ENCODE measurements at regions of chrX and their contacts with region 1.

Region 1: DNA sequence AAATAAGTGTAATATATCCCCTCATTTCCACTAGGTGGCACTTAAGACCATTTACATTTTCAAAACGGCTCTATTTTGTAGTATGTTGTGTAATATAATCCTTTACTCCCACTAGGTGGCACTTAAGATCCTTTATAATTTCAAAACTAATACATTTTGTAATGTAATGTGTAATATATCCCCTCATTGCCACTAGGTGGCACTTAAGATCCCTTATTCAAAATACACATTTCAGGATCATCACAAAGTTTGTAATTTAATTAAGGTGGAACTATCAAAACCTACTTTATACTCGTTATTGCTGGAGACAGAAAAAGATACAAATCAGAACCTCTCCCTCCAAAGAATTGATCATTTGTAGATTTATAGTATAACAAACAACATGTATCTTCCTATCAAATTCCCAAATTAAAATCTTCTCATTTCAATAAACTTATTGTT is 132.5 kb downstream of the ARHGAP6 start:
- DNase-seq: no peak
- H3K4me3 ChIP-seq: no peak overlapping the region
- H3K27ac ChIP-seq: no peak overlapping the region
- H3K4me1 ChIP-seq: no peaks in the 10 kb centered on the region
- H3K27me3 ChIP-seq: no peaks in the 10 kb centered on the region
- CTCF ChIP-seq: peak; percentile 74 to 87 (median 77)

Region 2: DNA sequence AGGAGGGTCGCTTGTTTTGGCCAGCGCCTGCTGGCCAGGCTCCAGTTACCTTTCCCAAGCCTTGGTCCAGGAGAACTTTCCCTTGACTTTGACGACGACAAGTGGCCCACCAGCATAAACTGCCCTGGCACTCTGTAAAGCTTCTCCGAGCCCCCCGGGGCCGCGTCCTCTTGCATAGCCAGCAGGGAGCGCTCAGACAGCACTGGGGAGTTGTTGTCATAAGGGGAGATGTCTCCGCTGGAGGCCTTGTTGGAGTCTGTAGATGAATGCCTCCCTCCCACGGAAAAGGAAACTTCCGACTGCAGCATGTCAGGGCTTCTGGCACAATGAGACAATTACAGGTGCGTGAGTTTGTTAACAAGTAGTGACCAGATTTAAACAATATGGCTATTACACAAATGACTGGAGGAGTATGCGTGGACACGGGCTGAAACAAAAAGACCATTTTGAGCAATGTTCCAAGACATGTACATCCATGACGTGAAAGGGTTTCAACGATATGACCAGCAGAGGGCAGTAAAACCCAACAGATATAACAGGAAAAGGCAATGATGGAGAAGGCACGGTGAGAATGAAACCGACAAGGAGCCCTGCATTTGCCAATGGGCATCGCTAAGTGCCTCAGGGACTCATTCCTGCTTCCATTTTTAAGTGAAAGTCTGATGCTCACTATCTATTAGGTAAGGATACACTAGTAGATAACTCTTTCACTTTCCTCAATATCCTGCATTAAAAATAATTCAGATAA is 389.1 kb before region 1 on chrX:
- intact Hi-C with region 1: loop called (anchors 1 kb)
- DNase-seq: peak in 1 of 2 donors; percentile 76
- H3K4me3 ChIP-seq: no peak overlapping the region
- H3K27ac ChIP-seq: no peak overlapping the region
- H3K4me1 ChIP-seq: no peaks in the 10 kb centered on the region
- H3K27me3 ChIP-seq: no peaks in the 10 kb centered on the region
- CTCF ChIP-seq: peak; percentile 51 to 66 (median 59)

Region 3: GRCh38 chrX:11381464-11381863 is 151.8 kb before region 1 on chrX:
- intact Hi-C with region 1: loop called (anchors 2 kb)
- DNase-seq: peak in 1 of 2 donors; percentile 79
- H3K4me3 ChIP-seq: no peak overlapping the region
- H3K27ac ChIP-seq: peak overlapping the region; percentile 61
- H3K4me1 ChIP-seq: peaks cover 4 to 29% of the 10 kb centered on the region in 2 donors
- H3K27me3 ChIP-seq: no peaks in the 10 kb centered on the region
- CTCF ChIP-seq: peak; percentile 19 to 63 (median 61)

Region 4: GRCh38 chrX:11665144-11666111 is 132.2 kb after region 1 on chrX and contains the start of gene ARHGAP6:
- intact Hi-C with region 1: loop called (anchors 5 kb)
- DNase-seq: peak in 1 of 2 donors; percentile 67
- H3K4me3 ChIP-seq: peak within 1 kb of the TSS; percentile 43 to 79
- H3K27ac ChIP-seq: peak within 1 kb of the TSS; percentile 46 to 78
- H3K4me1 ChIP-seq: no peaks in the 10 kb centered on the region
- H3K27me3 ChIP-seq: no peaks in the 10 kb centered on the region
- CTCF ChIP-seq: no peak
- total RNA-seq, gene ARHGAP6: 33.6 TPM

Region 5: DNA sequence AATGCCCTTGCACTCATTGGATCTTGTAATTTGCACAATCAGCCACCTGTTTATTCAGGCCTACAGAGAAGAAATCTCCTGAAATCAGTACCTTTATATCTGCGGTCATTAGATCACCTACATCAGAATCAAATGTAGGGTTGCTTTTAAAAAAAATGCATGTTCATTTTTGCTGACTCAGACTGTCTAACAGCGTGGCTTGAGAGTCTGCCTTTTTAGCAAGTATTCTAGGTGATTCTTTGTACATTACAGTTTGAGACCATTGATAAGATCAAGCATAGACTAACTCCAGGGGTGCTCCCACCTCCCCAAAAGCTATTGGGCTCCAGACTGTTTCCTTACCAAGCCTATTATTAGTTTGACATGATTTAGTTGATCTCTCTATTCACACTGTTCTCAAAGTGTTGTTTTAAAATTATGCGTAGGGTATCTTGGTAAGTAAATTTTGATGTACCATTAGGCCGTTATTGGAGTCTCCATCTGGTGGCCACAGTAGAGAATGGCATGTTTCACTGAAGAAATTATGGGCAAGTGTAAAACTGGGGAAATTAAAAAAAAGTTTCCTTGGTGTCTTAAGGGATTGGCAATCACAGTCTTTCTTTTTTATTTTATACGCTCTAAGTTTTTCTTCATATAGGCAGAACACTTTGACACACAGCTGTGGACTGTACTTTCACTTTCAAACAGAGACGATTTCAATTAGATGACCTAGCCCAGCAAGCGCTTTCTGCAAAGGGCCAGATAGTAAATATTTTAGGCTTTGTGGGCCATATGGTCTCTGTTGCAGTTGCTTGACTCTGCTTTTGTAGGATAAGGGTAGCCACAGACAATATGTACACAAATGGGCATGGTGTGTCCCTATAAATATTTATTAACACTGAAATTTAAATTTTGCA is 191.1 kb after region 1 on chrX:
- intact Hi-C with region 1: loop called (anchors 1 kb)
- DNase-seq: no peak
- H3K4me3 ChIP-seq: no peak overlapping the region
- H3K27ac ChIP-seq: no peak overlapping the region
- H3K4me1 ChIP-seq: no peaks in the 10 kb centered on the region
- H3K27me3 ChIP-seq: no peaks in the 10 kb centered on the region
- CTCF ChIP-seq: peak; percentile 44 to 68 (median 64)

Region 6: GRCh38 chrX:11758400-11759171 is 225.4 kb after region 1 on chrX:
- intact Hi-C with region 1: loop called (anchors 5 kb)
- DNase-seq: peak; percentile 29 to 92
- H3K4me3 ChIP-seq: peak overlapping the region; percentile 64 to 73
- H3K27ac ChIP-seq: peak overlapping the region; percentile 75 to 90
- H3K4me1 ChIP-seq: no peaks in the 10 kb centered on the region
- H3K27me3 ChIP-seq: no peaks in the 10 kb centered on the region
- CTCF ChIP-seq: peak; percentile 52 to 60 (median 59)

Region 7: GRCh38 chrX:11770320-11770719 is 237.1 kb after region 1 on chrX:
- intact Hi-C with region 1: loop called (anchors 1 kb)
- DNase-seq: no peak
- H3K4me3 ChIP-seq: no peak overlapping the region
- H3K27ac ChIP-seq: no peak overlapping the region
- H3K4me1 ChIP-seq: no peaks in the 10 kb centered on the region
- H3K27me3 ChIP-seq: no peaks in the 10 kb centered on the region
- CTCF ChIP-seq: peak; percentile 55 to 82 (median 74)

Measured in ascending aorta (tissue), 2 donors.